A673 (cell line): ENCODE measurements at regions of chr9 and their contacts with region 1.

Region 1: GRCh38 chr9:74958587-74958986 is 5.9 kb upstream of the C9orf40 start:
- DNase-seq: no peak
- H3K4me3 ChIP-seq: no peak overlapping the region
- H3K27ac ChIP-seq: no peak overlapping the region
- H3K4me1 ChIP-seq: no peaks in the 10 kb centered on the region
- H3K27me3 ChIP-seq: no peaks in the 10 kb centered on the region
- CTCF ChIP-seq: no peak

Region 2: DNA sequence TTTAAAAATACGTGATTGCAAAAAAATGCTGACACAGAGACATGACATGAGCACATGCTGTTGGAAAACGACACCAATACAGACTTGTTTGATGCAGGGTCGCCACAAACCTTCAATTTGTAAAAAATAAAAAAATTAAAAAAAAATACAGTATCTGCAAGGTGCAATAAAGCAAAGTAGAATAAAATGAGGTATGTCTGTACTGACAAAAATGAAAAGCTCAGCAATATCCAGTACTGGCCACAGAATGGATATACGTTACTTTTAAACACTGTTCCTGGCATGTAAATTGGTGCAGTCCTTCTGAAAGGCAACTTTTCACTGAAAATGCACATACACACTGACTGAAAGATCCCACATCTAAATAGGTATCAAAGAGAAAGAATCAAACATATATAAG is 21.3 kb after region 1 on chr9:
- CTCF ChIA-PET with region 1: no interaction called
- POLR2A ChIA-PET with region 1: no interaction called
- intact Hi-C with region 1: loop called (anchors 2 kb)
- DNase-seq: no peak
- H3K4me3 ChIP-seq: no peak overlapping the region
- H3K27ac ChIP-seq: no peak overlapping the region
- H3K4me1 ChIP-seq: no peaks in the 10 kb centered on the region
- H3K27me3 ChIP-seq: no peaks in the 10 kb centered on the region
- CTCF ChIP-seq: no peak